ENCODE measurements at regions of chr9 and their contacts with region 1.

Region 1: GRCh38 chr9:89549031-89549644 is 51.2 kb upstream of the SEMA4D start:
- DNase-seq: peak; percentile 72 to 90 (median 84)
- ATAC-seq: peak; percentile 99 to 100
- H3K4me3 Mint-ChIP-seq: peak overlapping the region in 3 of 10 donors; percentile 5 to 45 (median 38)
- H3K27ac Mint-ChIP-seq: peak overlapping the region in 8 of 10 donors; percentile 12 to 84 (median 74)
- H3K4me1 Mint-ChIP-seq: peaks cover 9 to 32% (median 28%) of the 10 kb centered on the region in 4 donors
- H3K27me3 Mint-ChIP-seq: no peaks in the 10 kb centered on the region

Region 2: GRCh38 chr9:89428901-89429890 is 119.9 kb before region 1 on chr9:
- POLR2A ChIA-PET with region 1: interaction called, 38 read pairs
- DNase-seq: peak; percentile 47 to 87 (median 72)
- ATAC-seq: peak; percentile 61 to 83
- H3K4me3 Mint-ChIP-seq: peak overlapping the region in 9 of 10 donors; percentile 39 to 85 (median 68)
- H3K27ac Mint-ChIP-seq: peak overlapping the region; percentile 81 to 98 (median 92)
- H3K4me1 Mint-ChIP-seq: peaks cover 45 to 100% (median 99%) of the 10 kb centered on the region in 4 donors
- H3K27me3 Mint-ChIP-seq: no peaks in the 10 kb centered on the region

Region 3: GRCh38 chr9:89448381-89448780 is 100.8 kb before region 1 on chr9:
- POLR2A ChIA-PET with region 1: interaction called, 11 read pairs
- DNase-seq: peak in 3 of 10 donors; percentile 26 to 46 (median 45)
- ATAC-seq: peak; percentile 27 to 29
- H3K4me3 Mint-ChIP-seq: peak overlapping the region; percentile 48 to 84 (median 78)
- H3K27ac Mint-ChIP-seq: peak overlapping the region; percentile 91 to 97 (median 96)
- H3K4me1 Mint-ChIP-seq: peaks cover 59 to 95% (median 94%) of the 10 kb centered on the region in 4 donors
- H3K27me3 Mint-ChIP-seq: no peaks in the 10 kb centered on the region

Region 4: DNA sequence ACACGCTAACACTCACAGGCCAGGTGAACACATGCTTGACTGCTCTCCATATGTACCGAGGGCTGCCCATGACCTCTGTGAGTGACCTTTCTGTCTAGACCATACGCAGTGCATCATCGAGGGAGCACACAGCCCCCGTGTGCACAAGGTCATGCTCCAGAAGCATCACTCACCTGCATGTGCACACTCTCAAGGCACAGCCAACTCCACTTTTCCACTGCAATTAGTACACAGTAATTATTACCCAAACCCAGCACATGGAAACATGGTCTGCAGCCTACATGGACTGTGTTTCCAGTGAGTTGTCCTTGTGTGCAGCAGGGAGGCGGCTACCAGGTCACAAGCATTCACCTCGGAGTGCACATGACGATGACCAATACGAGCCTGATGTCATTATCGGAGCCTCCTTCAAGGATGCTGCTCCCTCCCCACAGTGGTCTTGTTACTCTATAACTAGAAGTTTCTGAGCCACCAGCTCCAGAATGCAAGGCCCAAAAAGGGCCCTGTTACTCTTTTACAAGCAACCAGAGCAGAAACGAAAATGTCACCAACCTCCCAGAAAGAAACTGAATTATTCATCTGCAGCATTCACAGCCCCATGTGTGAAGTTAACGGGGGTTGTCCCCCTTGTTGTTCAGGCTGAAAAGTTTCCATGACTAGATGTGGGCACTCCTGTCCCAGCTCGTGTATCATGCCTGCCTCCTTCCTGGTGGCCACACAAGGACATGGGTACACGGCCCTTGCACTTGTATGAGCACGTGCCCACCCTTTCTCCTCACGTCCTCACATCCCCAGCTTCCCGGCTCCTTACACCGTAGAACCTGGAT is 82.5 kb before region 1 on chr9:
- POLR2A ChIA-PET with region 1: interaction called, 16 read pairs
- DNase-seq: peak in 5 of 10 donors; percentile 31 to 65 (median 49)
- ATAC-seq: peak in 1 of 2 donors; percentile 33
- H3K4me3 Mint-ChIP-seq: peak overlapping the region; percentile 75 to 90 (median 84)
- H3K27ac Mint-ChIP-seq: peak overlapping the region; percentile 94 to 99 (median 97)
- H3K4me1 Mint-ChIP-seq: peaks cover 71 to 99% (median 98%) of the 10 kb centered on the region in 4 donors
- H3K27me3 Mint-ChIP-seq: no peaks in the 10 kb centered on the region

Region 5: DNA sequence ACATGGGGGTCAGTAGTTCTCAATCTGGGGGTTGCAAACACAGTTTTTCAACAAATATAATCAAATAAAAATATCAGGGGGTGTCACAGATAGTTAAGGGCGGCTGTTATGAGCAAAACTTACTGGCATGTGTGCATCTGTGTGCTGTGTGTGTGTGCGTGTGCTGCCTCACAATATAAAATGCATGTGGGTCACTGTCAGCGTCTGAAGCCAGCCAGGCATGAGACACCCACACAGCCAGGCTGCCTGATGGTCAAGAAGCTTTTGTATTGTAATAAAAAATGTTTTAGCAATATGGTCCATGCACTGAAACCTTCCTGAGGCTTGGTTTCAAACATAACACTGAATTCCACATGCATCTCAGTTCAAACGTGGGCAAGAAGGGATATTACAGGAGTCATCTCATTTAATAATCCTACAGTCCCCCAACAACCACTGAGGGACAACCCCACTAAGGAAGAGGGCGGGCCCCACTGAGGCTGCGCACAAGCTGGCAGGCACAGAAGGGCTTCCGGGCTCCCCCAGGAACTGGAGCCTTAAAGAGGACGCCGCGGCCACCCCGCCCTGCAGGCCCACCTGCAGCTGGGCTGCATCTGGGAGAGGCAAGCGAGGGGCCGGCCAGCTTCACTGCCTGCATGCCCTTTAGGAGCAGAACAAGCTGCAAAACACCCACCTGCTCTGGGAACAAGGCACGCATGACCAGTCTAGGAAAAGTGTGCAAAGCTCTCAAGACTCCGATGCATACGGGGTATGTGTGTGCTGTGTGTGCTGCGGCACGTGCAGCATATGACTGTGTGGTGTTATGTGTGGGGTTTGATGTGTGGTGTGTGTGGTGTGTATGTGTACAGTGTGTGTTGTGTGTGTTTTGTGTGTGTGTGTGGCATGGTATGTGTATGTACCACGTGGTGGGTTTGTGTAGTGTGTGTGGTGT is 65.3 kb before region 1 on chr9:
- POLR2A ChIA-PET with region 1: interaction called, 26 read pairs
- DNase-seq: peak; percentile 65 to 89 (median 73)
- ATAC-seq: peak; percentile 71 to 84
- H3K4me3 Mint-ChIP-seq: peak overlapping the region; percentile 73 to 99 (median 95)
- H3K27ac Mint-ChIP-seq: peak overlapping the region; percentile 94 to 99 (median 95)
- H3K4me1 Mint-ChIP-seq: peaks cover 56 to 93% (median 91%) of the 10 kb centered on the region in 4 donors
- H3K27me3 Mint-ChIP-seq: no peaks in the 10 kb centered on the region

Region 6: DNA sequence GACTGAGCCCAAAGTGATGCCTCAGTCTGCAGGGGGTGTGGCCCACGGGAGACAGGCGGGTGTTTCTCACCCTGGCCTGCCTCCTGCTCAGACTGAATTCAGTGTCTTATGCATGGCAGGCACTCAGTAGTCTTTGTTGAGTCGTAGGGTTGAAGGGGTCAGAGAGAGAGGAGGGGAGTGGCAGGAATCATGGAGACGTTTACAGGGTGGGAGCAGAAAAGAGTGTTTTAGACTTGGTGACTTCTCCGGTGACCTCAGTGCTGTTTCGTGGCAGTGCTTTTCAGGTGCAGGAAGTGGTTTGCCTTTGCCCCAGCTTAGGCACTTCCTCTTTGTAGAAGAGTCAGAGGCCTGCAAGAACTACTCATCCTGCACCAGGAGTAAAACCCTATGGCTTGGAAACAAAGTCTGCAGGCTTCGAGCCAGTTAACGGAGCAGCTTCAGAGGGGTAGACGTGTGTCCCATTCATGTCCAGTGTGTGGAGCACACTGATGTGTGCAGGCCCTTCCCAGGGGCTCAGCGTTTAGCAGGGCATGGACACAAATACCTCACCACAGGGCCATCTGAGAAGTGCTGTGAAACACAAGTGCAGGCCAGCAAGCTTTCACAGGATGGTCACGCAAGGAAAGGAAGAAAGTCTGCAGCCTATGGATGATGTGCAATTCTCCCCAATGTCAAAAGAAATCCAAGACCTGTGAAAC is 26.7 kb before region 1 on chr9:
- POLR2A ChIA-PET with region 1: interaction called, 22 read pairs
- DNase-seq: peak; percentile 41 to 90 (median 81)
- ATAC-seq: peak; percentile 84 to 89
- H3K4me3 Mint-ChIP-seq: peak overlapping the region; percentile 49 to 87 (median 75)
- H3K27ac Mint-ChIP-seq: peak overlapping the region; percentile 87 to 98 (median 96)
- H3K4me1 Mint-ChIP-seq: peaks cover 56 to 99% (median 94%) of the 10 kb centered on the region in 4 donors
- H3K27me3 Mint-ChIP-seq: no peaks in the 10 kb centered on the region

Region 7: DNA sequence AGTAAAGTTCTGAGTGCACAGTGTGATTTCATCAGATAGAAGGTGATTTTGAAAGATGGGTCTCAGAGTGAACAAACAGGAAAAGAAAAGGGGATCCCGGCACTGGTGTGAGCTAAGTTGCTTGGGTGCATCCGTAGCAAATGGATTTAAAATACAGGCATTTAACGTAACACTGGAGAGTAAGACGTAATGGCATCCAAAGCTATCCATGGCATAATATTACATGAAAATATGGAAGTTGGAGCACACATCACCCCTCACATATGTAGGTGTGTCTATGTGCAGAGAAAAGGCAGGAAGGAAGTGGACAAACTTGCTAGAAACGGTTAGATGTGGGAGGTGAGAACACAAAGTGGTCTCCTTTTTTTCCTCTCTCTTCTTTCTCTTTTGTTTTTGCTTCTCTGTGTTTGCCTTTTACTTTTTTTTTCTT is 13.0 kb before region 1 on chr9:
- POLR2A ChIA-PET with region 1: interaction called, 24 read pairs
- DNase-seq: peak in 4 of 10 donors; percentile 43 to 84 (median 80)
- ATAC-seq: peak; percentile 72 to 85
- H3K4me3 Mint-ChIP-seq: peak overlapping the region; percentile 47 to 89 (median 76)
- H3K27ac Mint-ChIP-seq: peak overlapping the region; percentile 83 to 97 (median 94)
- H3K4me1 Mint-ChIP-seq: peaks cover 64 to 97% (median 95%) of the 10 kb centered on the region in 4 donors
- H3K27me3 Mint-ChIP-seq: no peaks in the 10 kb centered on the region

Measured in naive thymus-derived CD8-positive, alpha-beta T cell (primary cell).